ENCODE measurements at regions of chr1 and their contacts with region 1.

Region 1: DNA sequence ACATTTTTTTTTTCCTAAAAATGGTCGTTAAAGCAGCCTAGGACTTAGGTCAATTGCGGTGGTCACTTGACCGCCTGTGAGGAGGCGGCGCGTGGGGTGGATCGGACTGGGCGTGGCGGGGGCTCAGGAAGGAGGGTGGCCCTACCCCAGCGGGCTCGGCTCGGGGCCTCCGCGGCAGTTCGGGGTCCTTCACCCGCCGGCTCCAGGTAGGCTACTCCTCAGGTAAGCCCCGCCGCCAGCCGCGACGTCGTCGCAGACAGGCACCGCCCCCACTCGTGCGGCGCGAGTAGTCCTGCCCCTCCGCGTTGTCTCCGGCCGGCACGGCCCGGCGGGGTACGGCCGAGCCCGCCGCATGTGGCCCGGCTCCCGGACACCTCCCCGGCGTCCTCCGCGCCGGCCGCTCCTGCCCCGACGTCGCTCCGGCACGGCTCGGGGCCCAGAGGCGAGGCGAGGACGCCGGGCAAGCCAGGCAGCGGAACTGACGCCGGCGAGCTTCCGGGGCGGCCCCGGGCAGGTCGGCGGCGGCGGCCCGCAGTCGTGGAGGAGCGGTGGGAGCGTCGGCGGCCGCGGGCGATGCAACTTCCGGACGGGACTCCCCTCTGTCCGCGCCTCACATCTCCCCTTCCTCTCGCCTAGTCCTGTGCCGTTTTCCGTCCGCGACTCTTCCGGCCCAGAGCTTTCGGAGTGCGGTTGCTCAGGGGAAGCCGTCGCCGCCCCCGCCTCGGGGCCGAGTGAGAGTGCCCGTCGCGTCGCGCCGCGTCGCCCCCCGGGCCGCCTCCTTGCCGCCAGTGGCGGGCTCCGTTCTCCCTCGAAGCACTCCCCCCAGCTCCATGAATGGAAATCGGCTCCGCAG is at the start of gene AGO3:
- DNase-seq: peak; percentile 79 to 90 (median 86)
- ATAC-seq: peak; percentile 91
- H3K4me3 ChIP-seq: peak within 1 kb of the TSS; percentile 93
- H3K4me3 Mint-ChIP-seq: peak within 1 kb of the TSS; percentile 84 to 97 (median 92)
- H3K27ac ChIP-seq: peak within 1 kb of the TSS; percentile 95
- H3K27ac Mint-ChIP-seq: peak within 1 kb of the TSS; percentile 94 to 98 (median 96)
- H3K4me1 ChIP-seq: peaks cover 21 to 22% of the 10 kb centered on the region in 2 donors
- H3K4me1 Mint-ChIP-seq: peaks cover 14 to 46% (median 44%) of the 10 kb centered on the region in 7 donors
- H3K27me3 ChIP-seq: no peaks in the 10 kb centered on the region
- H3K27me3 Mint-ChIP-seq: no peaks in the 10 kb centered on the region
- total RNA-seq, gene AGO3: 27.2 to 49.2 (median 39.4) TPM

Region 2: DNA sequence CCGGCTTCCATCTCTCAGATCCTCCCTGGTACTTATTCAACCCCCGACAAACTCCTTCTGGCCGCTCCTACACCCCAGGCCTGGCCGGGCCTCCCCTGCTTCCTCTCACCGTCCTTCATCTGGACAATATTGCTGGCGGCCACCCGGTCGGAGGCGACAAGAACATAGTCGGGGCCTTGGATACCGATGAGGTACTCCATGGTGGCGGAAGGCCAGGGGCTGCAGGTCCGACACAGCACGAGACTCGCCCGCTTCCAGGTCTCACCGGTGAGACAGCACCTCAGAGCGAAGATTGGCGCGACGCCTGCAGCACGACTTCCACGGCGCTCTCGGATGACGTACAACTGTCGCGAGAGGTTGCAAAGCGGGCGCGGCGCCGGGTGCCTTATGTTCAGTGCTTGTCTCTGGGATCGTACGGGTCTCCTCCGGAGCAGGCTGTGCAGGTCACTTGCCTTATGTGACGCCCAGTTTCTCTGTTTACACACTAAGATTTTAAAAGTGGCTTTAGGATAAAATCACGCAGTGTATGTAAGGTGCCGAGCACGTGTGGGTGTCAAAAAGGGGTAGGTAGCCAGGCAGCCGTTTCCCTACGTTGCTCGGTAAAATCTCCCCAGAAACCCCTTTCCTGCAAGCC is 289.5 kb before region 1 on chr1 and contains the start of gene PSMB2:
- CTCF ChIA-PET with region 1: no interaction called
- POLR2A ChIA-PET with region 1: no interaction called
- intact Hi-C with region 1: loop called in 1 of 2 experiments (anchors 5 kb)
- DNase-seq: peak; percentile 89 to 96 (median 95)
- ATAC-seq: peak; percentile 97
- H3K4me3 ChIP-seq: peak within 1 kb of the TSS; percentile 89
- H3K4me3 Mint-ChIP-seq: peak within 1 kb of the TSS; percentile 97 to 100 (median 100)
- H3K27ac ChIP-seq: peak within 1 kb of the TSS; percentile 92
- H3K27ac Mint-ChIP-seq: peak within 1 kb of the TSS; percentile 98 to 100 (median 99)
- H3K4me1 ChIP-seq: peaks cover 18 to 19% of the 10 kb centered on the region in 2 donors
- H3K4me1 Mint-ChIP-seq: peaks cover 16 to 54% (median 42%) of the 10 kb centered on the region in 7 donors
- H3K27me3 ChIP-seq: no peaks in the 10 kb centered on the region
- H3K27me3 Mint-ChIP-seq: peaks cover 12 to 44% (median 30%) of the 10 kb centered on the region in 5 donors
- total RNA-seq, gene PSMB2: 20.4 to 93.5 (median 23.5) TPM

Region 3: DNA sequence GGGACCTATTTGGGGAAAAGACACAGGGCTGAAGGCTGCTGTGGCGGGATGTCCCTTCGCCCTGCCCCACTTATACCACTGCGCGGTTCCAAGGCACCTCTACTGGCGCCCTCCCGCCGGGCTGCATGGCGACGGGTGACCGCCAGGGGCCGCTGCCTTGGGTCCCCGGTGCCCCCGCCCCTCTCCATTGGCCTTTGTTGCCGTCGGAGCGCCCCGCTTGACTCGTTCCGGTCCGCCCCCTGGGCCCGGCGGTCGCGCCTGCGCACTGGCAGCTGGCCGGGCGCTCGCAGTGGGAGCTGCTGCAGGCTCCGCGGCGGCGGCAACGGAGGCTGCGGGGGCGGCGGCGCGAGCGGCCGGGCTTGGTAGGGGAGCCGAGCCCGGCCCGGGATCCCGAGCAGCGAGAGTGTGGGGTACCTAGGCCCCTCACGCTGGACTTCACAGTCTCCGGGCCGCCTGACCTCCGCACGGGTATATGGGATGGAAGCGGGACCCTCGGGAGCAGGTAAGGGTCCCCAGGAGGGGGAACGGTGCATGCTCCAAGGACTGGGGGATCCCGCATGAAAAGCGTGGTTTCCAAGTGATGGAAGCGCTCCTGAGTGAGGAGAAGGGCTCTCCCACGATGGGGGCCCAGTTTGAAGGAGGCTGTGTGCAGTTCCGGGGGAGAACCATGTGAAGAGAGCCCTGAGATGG is 47.7 kb before region 1 on chr1 and contains the start of gene AGO1:
- CTCF ChIA-PET with region 1: interaction called, 4 read pairs
- POLR2A ChIA-PET with region 1: interaction called, 8 read pairs
- intact Hi-C with region 1: loop called (anchors 1 kb)
- DNase-seq: peak; percentile 94 to 99 (median 97)
- ATAC-seq: peak; percentile 100
- H3K4me3 ChIP-seq: peak within 1 kb of the TSS; percentile 100
- H3K4me3 Mint-ChIP-seq: peak within 1 kb of the TSS; percentile 90 to 98 (median 94)
- H3K27ac ChIP-seq: peak within 1 kb of the TSS; percentile 79
- H3K27ac Mint-ChIP-seq: peak within 1 kb of the TSS; percentile 72 to 92 (median 84)
- H3K4me1 ChIP-seq: peaks cover 9 to 24% of the 10 kb centered on the region in 2 donors
- H3K4me1 Mint-ChIP-seq: peaks cover 37 to 55% (median 51%) of the 10 kb centered on the region in 7 donors
- H3K27me3 ChIP-seq: no peaks in the 10 kb centered on the region
- H3K27me3 Mint-ChIP-seq: peaks cover 0 to 4% (median 0%) of the 10 kb centered on the region in 5 donors
- total RNA-seq, gene AGO1: 22.5 to 28.0 (median 26.9) TPM

Region 4: DNA sequence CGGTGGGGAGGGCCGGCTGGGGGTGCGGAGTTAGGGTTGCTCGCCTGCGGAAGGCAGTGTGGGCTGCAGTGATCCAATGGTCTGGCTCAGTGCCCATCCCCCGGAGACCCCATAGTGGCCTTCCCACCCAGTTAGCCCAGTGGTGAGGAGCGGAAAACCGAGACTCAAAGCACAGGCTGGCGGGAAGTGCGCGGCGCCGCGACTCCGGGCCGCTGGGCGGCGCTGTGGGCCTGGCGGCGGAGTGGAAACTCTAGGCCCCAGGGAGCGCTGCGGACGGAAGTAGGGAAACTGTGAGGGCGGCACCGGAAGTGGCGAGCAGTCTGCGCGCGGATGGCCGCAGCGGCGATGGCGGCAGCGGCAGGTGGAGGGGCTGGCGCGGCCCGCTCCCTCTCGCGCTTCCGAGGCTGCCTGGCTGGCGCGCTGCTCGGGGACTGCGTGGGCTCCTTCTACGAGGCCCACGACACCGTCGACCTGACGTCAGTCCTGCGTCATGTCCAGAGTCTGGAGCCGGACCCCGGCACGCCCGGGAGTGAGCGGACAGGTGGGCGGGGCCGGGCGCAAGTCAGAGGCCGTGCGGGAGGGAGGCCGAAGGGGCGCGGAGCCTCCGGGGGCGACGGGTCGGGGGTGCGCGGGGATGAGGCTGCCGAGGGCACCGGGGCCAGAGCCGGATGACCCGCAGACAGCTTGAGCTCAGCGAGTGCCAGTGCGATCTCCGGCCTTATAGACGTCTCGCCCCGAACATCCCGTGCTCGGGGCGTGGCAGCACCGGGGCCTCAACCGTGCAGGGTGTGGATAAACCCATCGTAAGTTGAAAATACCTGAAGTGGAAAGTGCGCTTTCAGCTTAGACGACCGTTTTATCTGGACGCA is 158.0 kb after region 1 on chr1 and contains the start of gene ADPRS:
- CTCF ChIA-PET with region 1: no interaction called
- POLR2A ChIA-PET with region 1: no interaction called
- intact Hi-C with region 1: loop called (anchors 1 kb)
- DNase-seq: peak; percentile 81 to 95 (median 88)
- ATAC-seq: peak; percentile 98
- H3K4me3 ChIP-seq: peak within 1 kb of the TSS; percentile 47
- H3K4me3 Mint-ChIP-seq: peak within 1 kb of the TSS; percentile 83 to 96 (median 93)
- H3K27ac ChIP-seq: peak within 1 kb of the TSS; percentile 98
- H3K27ac Mint-ChIP-seq: peak within 1 kb of the TSS; percentile 86 to 97 (median 90)
- H3K4me1 ChIP-seq: peaks cover 11 to 16% of the 10 kb centered on the region in 2 donors
- H3K4me1 Mint-ChIP-seq: peaks cover 12 to 30% (median 23%) of the 10 kb centered on the region in 7 donors
- H3K27me3 ChIP-seq: peaks cover 0 to 5% of the 10 kb centered on the region in 2 donors
- H3K27me3 Mint-ChIP-seq: peaks cover 10 to 18% (median 10%) of the 10 kb centered on the region in 5 donors
- total RNA-seq, gene ADPRS: 18.0 to 30.2 (median 24.2) TPM

Region 5: GRCh38 chr1:36463803-36464604 is 533.2 kb after region 1 on chr1 and contains the start of gene MRPS15:
- CTCF ChIA-PET with region 1: no interaction called
- POLR2A ChIA-PET with region 1: no interaction called
- intact Hi-C with region 1: loop called in 1 of 2 experiments (anchors 10 kb)
- DNase-seq: peak; percentile 85 to 95 (median 93)
- ATAC-seq: peak; percentile 99
- H3K4me3 ChIP-seq: peak within 1 kb of the TSS; percentile 85
- H3K4me3 Mint-ChIP-seq: peak within 1 kb of the TSS; percentile 86 to 100 (median 97)
- H3K27ac ChIP-seq: peak within 1 kb of the TSS; percentile 91
- H3K27ac Mint-ChIP-seq: peak within 1 kb of the TSS; percentile 90 to 99 (median 98)
- H3K4me1 ChIP-seq: peaks cover 7 to 13% of the 10 kb centered on the region in 2 donors
- H3K4me1 Mint-ChIP-seq: peaks cover 18 to 54% (median 43%) of the 10 kb centered on the region in 7 donors
- H3K27me3 ChIP-seq: no peaks in the 10 kb centered on the region
- H3K27me3 Mint-ChIP-seq: no peaks in the 10 kb centered on the region
- total RNA-seq, gene MRPS15: 30.2 to 84.0 (median 36.3) TPM

Region 6: GRCh38 chr1:36831181-36831810 is 900.5 kb after region 1 on chr1:
- CTCF ChIA-PET with region 1: no interaction called
- POLR2A ChIA-PET with region 1: no interaction called
- intact Hi-C with region 1: no loop called
- DNase-seq: no peak
- ATAC-seq: no peak
- H3K4me3 ChIP-seq: no peak overlapping the region
- H3K4me3 Mint-ChIP-seq: no peak overlapping the region
- H3K27ac ChIP-seq: no peak overlapping the region
- H3K27ac Mint-ChIP-seq: no peak overlapping the region
- H3K4me1 ChIP-seq: no peaks in the 10 kb centered on the region
- H3K4me1 Mint-ChIP-seq: peaks cover 0 to 2% (median 0%) of the 10 kb centered on the region in 7 donors
- H3K27me3 ChIP-seq: no peaks in the 10 kb centered on the region
- H3K27me3 Mint-ChIP-seq: peaks cover 0 to 37% (median 14%) of the 10 kb centered on the region in 5 donors